PC-3 (cell line): ENCODE measurements at regions of chr20 and their contacts with region 1.

Region 1: DNA sequence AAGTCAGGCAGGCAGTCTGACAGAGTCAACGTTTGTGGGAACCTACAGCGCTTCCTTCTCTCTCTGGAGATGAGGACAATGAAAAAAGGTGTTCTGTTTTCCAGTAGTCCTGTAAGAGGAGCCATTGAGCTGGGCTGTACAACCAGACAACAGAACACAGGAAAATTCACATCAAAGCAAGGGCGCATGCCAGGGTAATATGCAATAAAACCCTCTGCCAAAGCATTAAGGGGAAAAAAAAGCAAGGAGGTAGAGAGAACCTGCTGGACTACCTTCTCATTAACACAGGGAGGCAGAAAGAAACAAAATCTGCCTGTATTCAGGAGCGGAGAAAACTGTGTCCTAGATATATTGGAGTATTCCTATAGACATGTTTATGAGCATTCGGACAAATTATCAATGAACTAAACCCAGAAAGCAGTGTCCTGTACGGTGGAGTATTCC is 1.3 kb downstream of the RNF24 start:
- DNase-seq: peak; percentile 97
- ATAC-seq: peak; percentile 66
- H3K4me3 ChIP-seq: peak overlapping the region; percentile 96
- H3K27ac ChIP-seq: peak overlapping the region; percentile 9; the same call in 1 of the 2 replicates
- H3K4me1 ChIP-seq: peaks cover 34% of the 10 kb centered on the region
- H3K27me3 ChIP-seq: no peaks in the 10 kb centered on the region
- CTCF ChIP-seq: peak; percentile 96

Region 2: DNA sequence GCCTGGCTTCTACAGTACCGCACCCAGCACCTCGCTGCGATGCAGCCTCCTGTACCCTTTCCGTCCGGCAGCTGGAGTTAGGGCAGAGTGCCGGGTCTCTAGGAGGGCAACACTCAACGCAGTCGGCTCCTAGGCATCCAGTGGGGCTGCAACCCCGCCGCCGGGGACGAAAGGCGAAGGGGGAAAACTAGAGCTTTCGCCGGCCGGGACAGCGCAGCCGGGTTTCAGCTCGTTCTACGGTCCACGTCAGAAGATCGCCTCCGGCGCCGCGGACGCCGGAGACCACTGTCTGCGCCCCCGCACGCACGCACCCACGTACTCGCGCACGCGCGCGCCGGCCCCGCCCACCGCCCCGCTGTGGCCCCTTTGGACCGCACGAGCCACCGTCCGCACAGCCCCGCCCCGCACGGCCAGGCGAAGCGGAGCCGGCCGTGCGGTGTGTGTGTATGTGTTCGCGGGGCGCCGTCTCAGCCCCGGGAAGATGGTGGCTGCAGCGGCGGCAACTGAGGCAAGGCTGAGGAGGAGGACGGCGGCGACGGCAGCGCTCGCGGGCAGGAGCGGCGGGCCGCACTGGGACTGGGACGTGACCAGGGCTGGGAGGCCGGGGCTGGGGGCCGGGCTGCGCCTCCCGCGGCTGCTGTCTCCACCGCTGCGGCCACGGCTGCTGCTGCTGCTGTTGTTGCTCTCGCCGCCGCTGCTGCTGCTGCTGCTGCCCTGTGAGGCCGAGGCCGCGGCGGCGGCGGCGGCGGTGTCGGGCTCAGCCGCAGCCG is 543.2 kb before region 1 on chr20 and contains the start of gene ATRN:
- CTCF ChIA-PET with region 1: no interaction called
- POLR2A ChIA-PET with region 1: no interaction called
- intact Hi-C with region 1: no loop called
- DNase-seq: peak; percentile 91
- ATAC-seq: peak; percentile 85
- H3K4me3 ChIP-seq: peak within 1 kb of the TSS; percentile 87
- H3K27ac ChIP-seq: no peak within 1 kb of the TSS; the same call in 1 of the 2 replicates
- H3K4me1 ChIP-seq: peaks cover 12% of the 10 kb centered on the region
- H3K27me3 ChIP-seq: peaks cover 10% of the 10 kb centered on the region; the same call in 1 of the 2 replicates
- CTCF ChIP-seq: no peak
- total RNA-seq, gene ATRN: 26.1 and 29.6 TPM in 2 replicates

Region 3: GRCh38 chr20:3889489-3890397 is 124.3 kb before region 1 on chr20:
- CTCF ChIA-PET with region 1: interaction called, 6 read pairs
- POLR2A ChIA-PET with region 1: no interaction called
- intact Hi-C with region 1: loop called (anchors 2 kb)
- DNase-seq: peak; percentile 27
- ATAC-seq: peak; percentile 2
- H3K4me3 ChIP-seq: peak overlapping the region; percentile 79
- H3K27ac ChIP-seq: peak overlapping the region; percentile 50
- H3K4me1 ChIP-seq: peaks cover 39% of the 10 kb centered on the region
- H3K27me3 ChIP-seq: no peaks in the 10 kb centered on the region
- CTCF ChIP-seq: no peak

Region 4: DNA sequence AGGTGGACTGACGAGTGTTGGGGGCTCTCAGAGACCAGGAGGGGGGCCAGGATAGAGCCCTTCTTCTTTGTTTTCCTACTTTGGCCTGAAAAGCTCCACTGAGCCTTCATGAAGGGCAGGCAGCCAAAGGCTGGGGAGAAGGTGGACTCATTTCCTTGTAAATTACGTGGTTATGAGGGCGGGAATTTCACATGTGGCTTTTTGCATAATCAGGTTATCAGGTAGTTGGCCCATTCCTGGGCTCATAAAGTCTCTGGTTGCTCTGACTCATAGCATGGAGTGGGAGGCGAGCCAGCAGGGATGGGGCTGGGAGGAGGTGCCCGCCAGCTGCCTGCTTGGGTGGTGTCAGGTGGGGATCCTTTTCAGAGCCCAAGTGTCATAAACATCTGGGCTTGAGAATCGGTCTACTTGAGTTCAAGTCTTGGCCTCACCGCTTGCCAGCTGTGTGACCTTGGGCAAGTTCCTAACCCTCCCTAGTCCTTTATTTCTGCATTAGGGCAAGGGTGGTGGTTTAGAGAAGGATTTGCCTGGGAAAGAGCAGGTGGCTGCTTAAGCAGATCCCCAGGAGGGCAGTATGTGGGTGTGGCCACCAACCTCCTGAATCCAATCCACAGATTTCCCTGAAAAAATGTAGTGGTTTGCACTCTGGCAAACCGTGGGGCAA is 27.8 kb after region 1 on chr20:
- CTCF ChIA-PET with region 1: no interaction called
- POLR2A ChIA-PET with region 1: no interaction called
- intact Hi-C with region 1: loop called (anchors 1 kb)
- DNase-seq: peak; percentile 100
- ATAC-seq: peak; percentile 81
- H3K4me3 ChIP-seq: no peak overlapping the region; the same call in 1 of the 2 replicates
- H3K27ac ChIP-seq: peak overlapping the region; percentile 49
- H3K4me1 ChIP-seq: peaks cover 53% of the 10 kb centered on the region
- H3K27me3 ChIP-seq: no peaks in the 10 kb centered on the region
- CTCF ChIP-seq: no peak

Region 5: GRCh38 chr20:4082406-4083097 is 68.5 kb after region 1 on chr20:
- CTCF ChIA-PET with region 1: interaction called, 14 read pairs
- POLR2A ChIA-PET with region 1: interaction called, 4 read pairs
- intact Hi-C with region 1: loop called (anchors 1 kb)
- DNase-seq: peak; percentile 25
- ATAC-seq: no peak
- H3K4me3 ChIP-seq: no peak overlapping the region
- H3K27ac ChIP-seq: no peak overlapping the region
- H3K4me1 ChIP-seq: peaks cover 9% of the 10 kb centered on the region; the same call in 1 of the 2 replicates
- H3K27me3 ChIP-seq: no peaks in the 10 kb centered on the region
- CTCF ChIP-seq: no peak

Region 6: DNA sequence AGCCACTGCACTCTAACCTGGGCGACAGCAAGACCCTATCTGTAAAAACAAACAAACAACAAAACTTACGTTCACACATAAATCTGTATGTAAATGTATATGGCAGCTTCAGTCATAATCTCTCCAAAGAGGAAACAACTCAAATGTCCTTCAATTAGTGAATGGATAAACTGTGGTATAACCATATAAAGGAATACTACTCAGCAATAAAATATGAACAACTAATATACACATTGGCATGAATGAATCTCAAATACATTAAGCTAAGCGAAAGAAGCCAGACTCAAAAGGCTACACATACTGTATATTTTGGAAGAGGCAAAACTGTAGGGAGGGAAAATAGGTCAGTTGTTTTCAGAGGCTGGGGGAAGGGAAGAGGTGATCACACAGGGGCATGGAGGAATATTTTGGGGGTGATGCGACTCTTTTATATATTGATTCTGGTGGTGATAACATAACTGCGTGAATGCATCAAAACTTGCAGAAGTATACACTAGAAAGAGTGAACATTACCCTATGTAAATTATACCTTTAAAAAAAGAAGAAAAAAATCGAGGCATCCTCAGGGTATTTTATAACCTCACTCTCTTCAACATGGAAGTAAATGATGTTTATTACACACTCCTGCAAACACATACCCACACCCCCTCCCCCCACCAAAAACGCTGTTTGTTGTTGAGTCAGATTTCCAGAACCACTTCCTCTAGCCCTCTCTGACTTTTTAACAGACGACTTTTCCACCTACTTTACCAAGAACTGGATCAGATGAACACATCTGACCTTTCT is 116.5 kb after region 1 on chr20:
- CTCF ChIA-PET with region 1: no interaction called
- POLR2A ChIA-PET with region 1: no interaction called
- intact Hi-C with region 1: no loop called
- DNase-seq: peak; percentile 90
- ATAC-seq: peak; percentile 65
- H3K4me3 ChIP-seq: peak overlapping the region; percentile 8; the same call in 1 of the 2 replicates
- H3K27ac ChIP-seq: peak overlapping the region; percentile 94
- H3K4me1 ChIP-seq: peaks cover 58% of the 10 kb centered on the region
- H3K27me3 ChIP-seq: no peaks in the 10 kb centered on the region
- CTCF ChIP-seq: no peak

Region 7: GRCh38 chr20:4195499-4195898 is 181.4 kb after region 1 on chr20:
- CTCF ChIA-PET with region 1: no interaction called
- POLR2A ChIA-PET with region 1: no interaction called
- intact Hi-C with region 1: loop called (anchors 5 kb)
- DNase-seq: peak; percentile 60
- ATAC-seq: peak; percentile 69
- H3K4me3 ChIP-seq: no peak overlapping the region
- H3K27ac ChIP-seq: no peak overlapping the region
- H3K4me1 ChIP-seq: peaks cover 33% of the 10 kb centered on the region
- H3K27me3 ChIP-seq: no peaks in the 10 kb centered on the region
- CTCF ChIP-seq: peak; percentile 89